Sigmoid colon (tissue), 7 donors: ENCODE measurements at regions of chr17 and their contacts with region 1.

Region 1: GRCh38 chr17:27332485-27333409 is 38.8 kb downstream of the WSB1 start:
- DNase-seq: peak; percentile 99
- H3K4me3 ChIP-seq: peak overlapping the region; percentile 18 to 58 (median 53)
- H3K27ac ChIP-seq: peak overlapping the region; percentile 88 to 93 (median 91)
- H3K4me1 ChIP-seq: peaks cover 0 to 20% (median 19%) of the 10 kb centered on the region in 4 donors
- H3K27me3 ChIP-seq: no peaks in the 10 kb centered on the region
- CTCF ChIP-seq: peak; percentile 86 to 93 (median 90)
- EP300 ChIP-seq: peak in 2 of 4 donors; percentile 32 to 54
- POLR2A ChIP-seq: no peak

Region 2: DNA sequence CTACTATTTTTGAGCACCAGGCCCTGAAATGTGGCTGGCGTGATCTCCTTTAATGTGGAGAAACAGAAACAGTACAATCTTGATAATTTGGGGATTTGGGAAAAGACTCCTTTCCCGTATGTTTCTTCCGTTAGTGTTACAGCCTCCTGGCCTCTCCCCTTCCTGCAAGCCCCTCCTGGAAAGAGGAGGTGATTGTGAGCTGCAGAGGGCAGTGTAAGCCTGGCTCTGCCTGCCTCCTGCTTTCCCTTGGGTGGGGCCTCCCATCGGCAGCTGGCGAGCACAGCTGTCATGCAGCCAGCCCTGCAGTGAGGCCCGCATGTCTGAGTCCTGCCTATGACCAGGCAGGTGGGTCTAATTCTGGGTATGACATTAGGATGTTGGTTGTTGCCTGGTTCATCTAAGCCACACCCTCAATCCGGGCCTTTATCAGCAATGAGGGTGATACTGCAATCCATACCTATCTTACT is 87.5 kb before region 1 on chr17:
- intact Hi-C with region 1: loop called (anchors 1 kb)
- DNase-seq: peak; percentile 93
- H3K4me3 ChIP-seq: no peak overlapping the region
- H3K27ac ChIP-seq: peak overlapping the region; percentile 83 to 84 (median 83)
- H3K4me1 ChIP-seq: peaks cover 0 to 51% (median 45%) of the 10 kb centered on the region in 4 donors
- H3K27me3 ChIP-seq: no peaks in the 10 kb centered on the region
- CTCF ChIP-seq: peak; percentile 63 to 74 (median 72)
- EP300 ChIP-seq: no peak
- POLR2A ChIP-seq: no peak

Region 3: GRCh38 chr17:27455914-27456680 is 123.3 kb after region 1 on chr17 and contains the start of gene KSR1:
- intact Hi-C with region 1: no loop called
- DNase-seq: peak; percentile 90
- H3K4me3 ChIP-seq: peak within 1 kb of the TSS; percentile 64 to 90 (median 81)
- H3K27ac ChIP-seq: peak within 1 kb of the TSS; percentile 86 to 93 (median 89)
- H3K4me1 ChIP-seq: peaks cover 0 to 38% (median 28%) of the 10 kb centered on the region in 4 donors
- H3K27me3 ChIP-seq: no peaks in the 10 kb centered on the region
- CTCF ChIP-seq: peak in 1 of 4 experiments; percentile 22
- EP300 ChIP-seq: no peak
- POLR2A ChIP-seq: peak in 1 of 2 donors; percentile 31
- total RNA-seq, gene KSR1: 13.8 to 25.8 (median 18.9) TPM